ENCODE measurements at regions of chr11 and their contacts with region 1.

Region 1: GRCh38 chr11:77619576-77620198 is 17.9 kb downstream of the CLNS1A start:
- H3K4me3 ChIP-seq: no peak overlapping the region
- H3K27ac ChIP-seq: no peak overlapping the region
- H3K4me1 ChIP-seq: no peaks in the 10 kb centered on the region
- CTCF ChIP-seq: no peak; the same call in 1 of the 2 replicates

Region 2: DNA sequence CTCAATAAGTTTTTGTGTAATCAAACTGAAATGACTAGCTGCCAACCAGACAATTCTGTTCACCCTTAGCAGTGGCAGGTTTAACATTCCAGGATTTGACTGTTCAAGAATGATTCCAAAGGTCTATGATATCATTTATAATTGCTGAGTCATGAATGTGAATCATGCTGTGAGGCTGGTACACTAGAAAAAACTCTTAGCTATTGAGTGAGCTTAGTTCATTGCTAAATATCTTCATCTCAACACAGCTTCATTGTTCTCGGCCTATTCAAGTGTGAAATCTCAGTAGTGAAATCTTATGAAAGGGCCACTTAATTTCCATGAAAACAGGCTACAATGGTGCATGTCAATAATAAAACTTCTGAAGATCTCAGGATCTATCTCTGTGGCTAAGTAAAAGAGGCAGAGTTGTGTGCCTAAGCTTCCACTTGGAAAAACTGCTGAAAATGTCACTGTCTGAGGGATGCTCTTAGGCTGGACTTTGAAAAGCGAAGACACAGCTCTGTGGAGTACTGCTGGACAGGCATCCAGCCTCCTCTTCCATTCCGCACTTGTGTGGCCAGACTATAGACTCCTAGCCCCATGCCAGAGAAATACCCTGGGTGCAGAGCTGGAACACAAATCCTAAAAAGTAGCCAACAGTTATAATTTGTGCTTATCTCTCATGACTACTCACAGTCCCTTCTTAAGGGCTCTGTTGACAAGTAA is 17.2 kb before region 1 on chr11:
- CTCF ChIA-PET with region 1: interaction called, 12 read pairs
- POLR2A ChIA-PET with region 1: no interaction called
- H3K4me3 ChIP-seq: no peak overlapping the region
- H3K27ac ChIP-seq: no peak overlapping the region
- H3K4me1 ChIP-seq: no peaks in the 10 kb centered on the region
- CTCF ChIP-seq: no peak

Region 3: GRCh38 chr11:77851503-77851902 is 231.8 kb after region 1 on chr11:
- CTCF ChIA-PET with region 1: no interaction called
- POLR2A ChIA-PET with region 1: no interaction called
- H3K4me3 ChIP-seq: no peak overlapping the region
- H3K27ac ChIP-seq: no peak overlapping the region
- H3K4me1 ChIP-seq: no peaks in the 10 kb centered on the region
- CTCF ChIP-seq: no peak

Measured in HEK293 (cell line).